Naive thymus-derived CD4-positive, alpha-beta T cell (primary cell): ENCODE measurements at regions of chr10 and their contacts with region 1.

Region 1: DNA sequence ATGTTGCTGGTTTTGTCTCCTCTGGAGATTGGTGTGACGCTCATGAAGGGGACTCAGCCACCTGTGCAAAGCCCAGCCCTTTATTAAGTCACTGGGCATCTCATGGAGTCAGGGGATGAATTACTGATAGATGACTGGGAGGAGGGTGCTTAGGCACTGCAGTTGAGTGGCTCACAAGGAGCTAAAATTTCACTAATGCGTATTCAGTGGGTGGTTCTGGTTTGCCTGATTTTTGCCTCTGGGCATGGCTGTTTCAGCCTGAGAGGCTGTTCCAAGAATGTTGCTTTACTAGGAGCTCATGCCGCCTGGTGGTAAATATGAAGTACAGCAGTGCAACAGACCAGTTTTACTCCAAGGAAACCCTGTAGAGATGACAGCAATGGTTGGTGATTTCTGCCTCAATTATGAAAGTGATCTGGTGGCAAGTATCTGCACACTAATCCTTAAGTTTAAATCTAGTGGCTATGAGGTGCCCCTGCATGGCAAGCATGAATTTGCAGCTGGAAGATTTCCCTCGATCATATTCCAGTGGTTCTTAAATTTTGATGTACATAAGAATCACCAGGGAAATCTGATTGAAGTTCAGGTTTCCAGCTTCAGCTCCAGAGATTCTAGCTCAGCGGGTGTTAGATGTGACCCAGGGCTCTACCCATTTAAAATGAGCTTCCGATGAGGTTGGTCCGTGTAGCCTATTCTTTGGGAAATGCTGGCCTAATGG is 19.9 kb downstream of the ACTA2 start:
- DNase-seq: peak in 7 of 9 donors; percentile 16 to 63 (median 45)
- ATAC-seq: peak; percentile 78
- H3K4me3 ChIP-seq: no peak overlapping the region
- H3K4me3 Mint-ChIP-seq: no peak overlapping the region
- H3K27ac ChIP-seq: no peak overlapping the region
- H3K27ac Mint-ChIP-seq: peak overlapping the region in 5 of 9 donors; percentile 15 to 70 (median 48)
- H3K4me1 ChIP-seq: peaks cover 5 to 10% of the 10 kb centered on the region in 2 donors
- H3K4me1 Mint-ChIP-seq: peaks cover 5 to 28% (median 18%) of the 10 kb centered on the region in 7 donors
- H3K27me3 ChIP-seq: no peaks in the 10 kb centered on the region
- H3K27me3 Mint-ChIP-seq: no peaks in the 10 kb centered on the region

Region 2: DNA sequence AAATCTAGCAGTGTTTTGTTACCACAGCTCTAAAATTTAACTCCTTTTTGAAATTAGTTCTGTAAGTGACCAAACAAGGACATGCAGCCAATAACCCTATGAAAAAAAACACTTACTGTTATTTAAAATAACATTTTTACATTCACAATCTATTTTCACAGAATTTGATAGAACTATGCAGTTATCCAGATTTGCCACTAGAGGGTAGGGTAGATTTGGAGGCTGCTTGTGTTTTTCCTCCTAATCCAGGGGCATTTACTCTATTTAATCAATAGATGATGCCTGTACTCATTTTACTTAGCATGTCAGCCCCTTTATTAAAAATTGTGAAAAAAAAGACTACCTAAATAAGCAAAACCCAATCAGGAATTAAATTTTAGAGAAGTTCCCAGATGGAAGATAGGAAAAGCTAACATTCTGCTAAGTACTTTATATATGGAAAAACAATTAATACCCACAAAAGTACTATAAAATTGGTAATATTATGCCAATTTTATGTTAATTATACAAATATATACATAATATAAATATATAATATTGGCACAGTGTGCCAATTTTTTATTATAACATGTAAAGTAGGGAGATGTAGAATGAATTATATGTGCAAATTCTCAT is 244.7 kb before region 1 on chr10:
- CTCF ChIA-PET with region 1: interaction called, 4 read pairs
- POLR2A ChIA-PET with region 1: no interaction called
- intact Hi-C with region 1: loop called (anchors 1 kb)
- DNase-seq: peak in 5 of 9 donors; percentile 7 to 38 (median 18)
- ATAC-seq: peak; percentile 70
- H3K4me3 ChIP-seq: no peak overlapping the region
- H3K4me3 Mint-ChIP-seq: no peak overlapping the region
- H3K27ac ChIP-seq: no peak overlapping the region
- H3K27ac Mint-ChIP-seq: no peak overlapping the region
- H3K4me1 ChIP-seq: no peaks in the 10 kb centered on the region
- H3K4me1 Mint-ChIP-seq: no peaks in the 10 kb centered on the region
- H3K27me3 ChIP-seq: no peaks in the 10 kb centered on the region
- H3K27me3 Mint-ChIP-seq: peaks cover 7 to 30% (median 7%) of the 10 kb centered on the region in 5 donors

Region 3: DNA sequence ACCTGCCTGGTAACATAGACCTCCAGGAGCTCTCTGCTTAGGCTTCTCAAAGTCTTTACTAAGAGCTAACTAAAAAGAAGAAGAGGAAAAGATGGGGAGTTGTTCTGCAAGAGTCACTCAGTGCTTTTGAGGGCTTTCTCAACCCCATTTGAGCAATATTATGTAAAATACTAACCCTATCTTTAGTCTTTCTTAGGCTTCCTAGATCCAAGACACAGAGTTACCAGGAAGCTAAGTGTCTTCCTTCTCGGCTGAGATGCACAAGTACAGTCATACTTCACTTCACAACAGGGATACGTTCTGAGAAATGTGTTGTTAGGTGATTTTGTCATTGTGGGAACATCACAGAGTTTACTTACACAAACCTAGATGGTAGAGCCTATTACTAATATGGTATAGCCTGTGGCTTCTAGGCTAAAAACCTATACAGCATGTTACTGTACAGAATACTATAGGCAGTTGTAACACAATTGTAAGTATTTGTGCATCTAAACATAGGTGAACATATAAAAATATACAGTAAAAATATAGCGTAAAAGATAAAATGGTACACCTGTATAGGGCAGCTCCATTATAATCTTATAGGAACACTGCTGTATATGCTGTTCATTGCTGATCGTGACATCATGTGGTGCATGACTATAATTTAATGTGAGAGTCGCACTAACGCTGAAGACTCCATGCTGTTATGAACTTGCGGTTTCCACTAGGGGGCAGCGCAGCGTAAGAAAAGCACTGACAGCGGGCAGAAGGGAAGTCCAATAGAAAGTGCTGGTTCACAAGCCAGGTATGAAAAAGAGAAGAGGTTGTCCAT is 97.4 kb before region 1 on chr10:
- CTCF ChIA-PET with region 1: interaction called, 250 read pairs
- POLR2A ChIA-PET with region 1: interaction called, 8 read pairs
- intact Hi-C with region 1: loop called (anchors 1 kb)
- DNase-seq: peak; percentile 65 to 86 (median 82)
- ATAC-seq: peak; percentile 95
- H3K4me3 ChIP-seq: no peak overlapping the region
- H3K4me3 Mint-ChIP-seq: no peak overlapping the region
- H3K27ac ChIP-seq: no peak overlapping the region
- H3K27ac Mint-ChIP-seq: no peak overlapping the region
- H3K4me1 ChIP-seq: peaks cover 14 to 46% of the 10 kb centered on the region in 2 donors
- H3K4me1 Mint-ChIP-seq: peaks cover 10 to 33% (median 32%) of the 10 kb centered on the region in 7 donors
- H3K27me3 ChIP-seq: no peaks in the 10 kb centered on the region
- H3K27me3 Mint-ChIP-seq: no peaks in the 10 kb centered on the region

Region 4: GRCh38 chr10:88944813-88945212 is 12.1 kb after region 1 on chr10:
- CTCF ChIA-PET with region 1: interaction called, 23 read pairs
- POLR2A ChIA-PET with region 1: no interaction called
- intact Hi-C with region 1: no loop called
- DNase-seq: no peak
- ATAC-seq: no peak
- H3K4me3 ChIP-seq: no peak overlapping the region
- H3K4me3 Mint-ChIP-seq: no peak overlapping the region
- H3K27ac ChIP-seq: no peak overlapping the region
- H3K27ac Mint-ChIP-seq: peak overlapping the region in 1 of 9 donors; percentile 62
- H3K4me1 ChIP-seq: no peaks in the 10 kb centered on the region
- H3K4me1 Mint-ChIP-seq: peaks cover 0 to 19% (median 7%) of the 10 kb centered on the region in 7 donors
- H3K27me3 ChIP-seq: no peaks in the 10 kb centered on the region
- H3K27me3 Mint-ChIP-seq: peaks cover 0 to 3% (median 0%) of the 10 kb centered on the region in 5 donors

Region 5: GRCh38 chr10:88996927-88997326 is 64.2 kb after region 1 on chr10:
- CTCF ChIA-PET with region 1: interaction called, 12 read pairs
- POLR2A ChIA-PET with region 1: no interaction called
- intact Hi-C with region 1: loop called in 1 of 2 experiments (anchors 1 kb)
- DNase-seq: no peak
- ATAC-seq: peak; percentile 78
- H3K4me3 ChIP-seq: no peak overlapping the region
- H3K4me3 Mint-ChIP-seq: peak overlapping the region in 1 of 10 donors; percentile 12
- H3K27ac ChIP-seq: no peak overlapping the region
- H3K27ac Mint-ChIP-seq: peak overlapping the region in 1 of 9 donors; percentile 14
- H3K4me1 ChIP-seq: peaks cover 33 to 59% of the 10 kb centered on the region in 2 donors
- H3K4me1 Mint-ChIP-seq: peaks cover 33 to 74% (median 52%) of the 10 kb centered on the region in 7 donors
- H3K27me3 ChIP-seq: no peaks in the 10 kb centered on the region
- H3K27me3 Mint-ChIP-seq: no peaks in the 10 kb centered on the region

Region 6: DNA sequence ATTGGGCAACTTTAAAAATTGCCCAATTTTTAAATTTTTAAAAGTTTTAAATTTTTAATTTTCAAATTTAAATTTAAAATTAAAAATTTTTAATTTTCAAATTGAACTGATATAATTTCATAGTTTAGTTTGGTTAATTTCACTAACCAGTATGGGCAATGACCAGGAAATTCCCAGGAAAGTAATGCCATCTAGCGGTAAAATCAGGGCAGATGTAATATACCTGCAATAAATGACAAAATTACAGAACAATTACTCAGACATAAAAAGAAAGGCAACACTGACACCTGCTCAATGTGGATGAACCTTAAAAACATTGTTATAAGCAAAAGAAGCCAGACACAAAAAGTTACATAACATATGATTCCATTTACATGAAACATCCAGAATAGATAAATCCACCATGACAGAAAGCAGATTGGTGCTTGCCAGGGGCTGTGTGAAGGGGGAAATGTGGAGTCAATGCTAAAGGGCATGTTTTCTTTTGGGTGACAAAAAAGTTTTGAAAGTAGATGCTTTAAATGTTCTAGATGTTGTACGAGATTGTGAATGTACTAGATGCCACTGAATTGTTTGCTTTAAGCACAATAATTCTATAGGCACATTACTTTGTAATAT is 631.3 kb after region 1 on chr10:
- CTCF ChIA-PET with region 1: no interaction called
- POLR2A ChIA-PET with region 1: no interaction called
- intact Hi-C with region 1: loop called in 1 of 2 experiments (anchors 5 kb)
- DNase-seq: peak in 7 of 9 donors; percentile 13 to 58 (median 48)
- ATAC-seq: peak; percentile 65
- H3K4me3 ChIP-seq: no peak overlapping the region
- H3K4me3 Mint-ChIP-seq: no peak overlapping the region
- H3K27ac ChIP-seq: no peak overlapping the region
- H3K27ac Mint-ChIP-seq: no peak overlapping the region
- H3K4me1 ChIP-seq: no peaks in the 10 kb centered on the region
- H3K4me1 Mint-ChIP-seq: no peaks in the 10 kb centered on the region
- H3K27me3 ChIP-seq: no peaks in the 10 kb centered on the region
- H3K27me3 Mint-ChIP-seq: peaks cover 4 to 44% (median 14%) of the 10 kb centered on the region in 5 donors